Dendritic cell treated with granulocyte-macrophage colony-stimulating factor and Interleukin-4, amounts not matched to agents 40 ng/mL and 50 ng/mL, for 4 days (primary cell): ENCODE measurements at regions of chr1 and their contacts with region 1.

Region 1: DNA sequence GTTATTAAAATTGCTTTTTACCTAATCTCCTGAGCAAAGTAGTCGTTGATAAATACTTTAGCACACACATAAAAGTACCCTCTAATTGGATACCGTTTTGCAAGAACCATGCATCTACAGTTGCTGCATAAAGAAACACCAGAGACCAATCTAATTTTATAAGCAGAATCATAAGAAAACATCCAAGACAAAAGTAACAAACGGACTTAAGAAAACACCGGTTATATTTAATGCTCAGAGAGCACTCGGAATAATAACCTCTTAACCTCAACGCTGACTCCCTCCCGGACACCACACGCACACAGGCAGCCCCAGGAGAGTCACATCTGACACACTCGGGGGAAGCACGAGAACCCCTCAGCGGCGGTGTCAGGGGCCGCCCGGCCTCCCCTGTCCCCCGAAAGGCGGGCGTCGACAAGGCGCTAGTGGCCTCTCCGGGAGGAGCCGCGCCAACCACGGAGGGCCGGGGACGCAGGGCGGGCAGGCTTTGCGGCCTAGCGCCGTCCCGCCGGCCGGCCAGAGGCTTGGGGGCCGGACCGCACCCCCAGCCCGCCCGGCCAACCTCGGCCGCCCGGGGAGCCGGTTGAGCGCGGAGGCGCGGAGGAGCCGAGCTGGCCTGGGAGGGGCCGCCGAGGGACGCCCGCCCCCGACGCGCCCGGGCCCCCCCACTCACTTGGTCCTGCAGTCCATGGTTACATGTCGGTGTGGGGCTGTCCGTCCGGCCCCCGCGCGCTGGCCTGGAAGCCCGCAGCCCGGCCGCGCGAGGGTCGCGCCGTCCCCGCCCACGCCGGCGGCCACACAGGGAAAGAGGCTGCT is 606 bp downstream of the DENND1B start:
- H3K4me3 Mint-ChIP-seq: peak overlapping the region; percentile 80
- H3K27ac Mint-ChIP-seq: peak overlapping the region; percentile 90
- H3K4me1 Mint-ChIP-seq: peaks cover 61% of the 10 kb centered on the region
- H3K27me3 Mint-ChIP-seq: no peaks in the 10 kb centered on the region

Region 2: DNA sequence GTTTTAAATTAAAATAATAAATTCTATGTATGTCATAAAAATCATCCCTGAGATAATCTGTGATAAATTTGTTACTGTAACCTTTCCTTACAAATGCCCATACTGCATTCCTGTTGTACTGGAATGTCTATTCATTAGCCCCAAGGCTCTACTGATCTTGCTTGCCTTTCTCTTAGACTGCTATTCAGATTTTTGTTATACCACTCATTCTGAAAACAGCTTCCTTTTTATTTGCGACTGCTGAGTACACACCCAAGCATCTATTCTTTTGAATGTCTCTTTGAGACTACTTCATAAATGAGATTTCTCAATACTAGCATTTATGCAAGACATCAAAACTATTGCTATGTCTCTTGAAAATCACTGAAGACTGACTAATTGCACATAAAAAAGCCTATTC is 38.0 kb before region 1 on chr1:
- intact Hi-C with region 1: loop called (anchors 5 kb)
- H3K4me3 Mint-ChIP-seq: no peak overlapping the region
- H3K27ac Mint-ChIP-seq: no peak overlapping the region
- H3K4me1 Mint-ChIP-seq: peaks cover 49% of the 10 kb centered on the region
- H3K27me3 Mint-ChIP-seq: no peaks in the 10 kb centered on the region

Region 3: GRCh38 chr1:197761621-197762020 is 13.1 kb before region 1 on chr1:
- intact Hi-C with region 1: loop called (anchors 1 kb)
- H3K4me3 Mint-ChIP-seq: no peak overlapping the region
- H3K27ac Mint-ChIP-seq: no peak overlapping the region
- H3K4me1 Mint-ChIP-seq: peaks cover 26% of the 10 kb centered on the region
- H3K27me3 Mint-ChIP-seq: no peaks in the 10 kb centered on the region

Region 4: DNA sequence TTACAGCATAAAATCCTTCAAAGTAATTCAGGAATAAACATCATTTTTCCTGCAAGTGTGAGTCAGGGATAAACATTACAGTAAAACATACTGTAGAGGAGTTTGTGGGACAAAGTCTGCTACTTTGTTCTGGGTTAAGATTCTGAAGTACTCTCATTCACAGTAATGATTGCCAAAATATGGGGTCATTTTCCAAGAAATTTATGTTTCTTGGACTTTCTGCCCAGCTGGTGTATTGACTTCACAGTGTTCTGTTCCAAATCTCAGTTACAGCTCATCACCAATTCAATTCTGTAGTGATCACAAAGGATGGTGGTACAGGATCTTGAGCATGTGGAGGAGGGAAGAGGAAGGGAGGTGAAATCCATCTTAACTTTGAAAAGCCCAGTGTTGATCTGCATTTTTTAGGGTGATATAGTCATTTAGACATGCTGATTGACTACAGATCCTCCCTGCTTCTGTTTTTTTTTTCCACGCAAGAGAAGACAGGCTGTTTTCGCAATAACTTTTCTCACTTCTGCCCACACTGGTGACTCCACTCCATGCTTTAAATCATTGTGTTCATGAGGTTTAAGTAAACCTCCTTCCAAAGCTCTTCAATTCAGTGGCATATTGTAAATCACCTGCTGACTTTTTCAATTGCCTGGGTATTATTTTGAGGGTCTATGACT is 67.3 kb after region 1 on chr1:
- intact Hi-C with region 1: loop called (anchors 1 kb)
- H3K4me3 Mint-ChIP-seq: no peak overlapping the region
- H3K27ac Mint-ChIP-seq: peak overlapping the region; percentile 68
- H3K4me1 Mint-ChIP-seq: peaks cover 28% of the 10 kb centered on the region
- H3K27me3 Mint-ChIP-seq: no peaks in the 10 kb centered on the region